Dorsolateral prefrontal cortex (tissue), 120 donors: ENCODE measurements at regions of chr10 and their contacts with region 1.

Region 1: DNA sequence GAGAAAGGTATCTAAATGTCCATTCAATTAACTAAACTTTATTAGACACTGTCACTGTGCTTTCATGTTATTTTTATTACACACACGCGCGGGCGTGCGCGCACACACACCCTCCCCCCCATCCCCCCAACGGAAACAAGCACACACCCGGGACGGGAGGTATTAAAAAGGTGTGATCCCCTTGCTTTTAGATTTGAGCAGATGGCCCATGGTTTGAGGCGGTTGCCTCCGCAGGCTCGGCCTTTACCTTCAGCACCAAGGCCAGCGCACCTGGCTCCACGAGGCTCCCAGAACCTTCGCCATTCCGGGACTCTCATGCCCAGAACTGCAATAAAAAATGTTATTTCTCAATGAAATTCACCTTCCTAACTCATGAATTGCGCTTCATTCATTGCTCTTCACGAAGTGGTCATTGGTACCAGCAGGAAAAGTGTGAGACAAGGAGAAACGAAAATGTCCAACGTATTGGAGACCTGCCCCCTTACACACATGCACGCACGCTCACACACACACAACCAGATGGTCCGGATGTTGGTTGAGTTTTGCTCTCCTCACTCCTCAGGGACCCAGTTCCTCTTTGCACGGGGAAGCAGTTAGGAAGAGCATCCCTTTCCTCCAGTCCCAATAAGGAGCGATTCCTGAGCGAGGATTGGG is 20.8 kb upstream of the PTF1A start:
- DNase-seq: no peak
- H3K4me3 ChIP-seq: peak overlapping the region in 8 of 59 donors; percentile 56 to 67 (median 66)
- H3K27ac ChIP-seq: no peak overlapping the region
- H3K27me3 ChIP-seq: peaks cover 0 to 51% (median 31%) of the 10 kb centered on the region in 45 donors
- CTCF ChIP-seq: no peak

Region 2: DNA sequence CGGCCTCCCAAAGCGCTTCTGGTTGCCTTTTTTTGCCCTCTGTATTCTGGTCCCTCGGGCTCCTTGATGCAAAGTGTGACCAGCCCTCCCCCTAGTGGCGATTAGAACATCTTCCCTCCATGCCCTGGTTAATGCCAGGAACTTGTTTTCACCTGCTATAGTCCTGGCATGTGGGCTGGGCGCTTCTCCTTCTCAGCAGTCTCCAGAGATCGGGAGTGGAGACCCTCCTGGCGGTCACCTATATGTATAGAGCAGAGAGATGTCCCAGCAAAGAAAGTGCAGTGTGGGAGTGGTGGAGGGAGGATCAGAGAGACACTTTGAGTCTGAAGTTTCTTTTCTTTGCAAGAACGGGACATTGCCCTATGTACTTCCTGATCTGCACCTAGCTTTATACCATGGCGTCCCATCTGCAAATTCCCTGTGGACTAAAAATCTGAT is 531.6 kb after region 1 on chr10:
- intact Hi-C with region 1: loop called in 1 of 2 experiments (anchors 10 kb)
- DNase-seq: peak in 7 of 10 donors; percentile 9 to 55 (median 41)
- H3K4me3 ChIP-seq: peak overlapping the region in 1 of 59 donors; percentile 24
- H3K27ac ChIP-seq: no peak overlapping the region
- H3K27me3 ChIP-seq: peaks cover 0 to 9% (median 0%) of the 10 kb centered on the region in 45 donors
- CTCF ChIP-seq: peak; percentile 19 to 79 (median 65)